ENCODE measurements at regions of chr3 and their contacts with region 1.

Region 1: DNA sequence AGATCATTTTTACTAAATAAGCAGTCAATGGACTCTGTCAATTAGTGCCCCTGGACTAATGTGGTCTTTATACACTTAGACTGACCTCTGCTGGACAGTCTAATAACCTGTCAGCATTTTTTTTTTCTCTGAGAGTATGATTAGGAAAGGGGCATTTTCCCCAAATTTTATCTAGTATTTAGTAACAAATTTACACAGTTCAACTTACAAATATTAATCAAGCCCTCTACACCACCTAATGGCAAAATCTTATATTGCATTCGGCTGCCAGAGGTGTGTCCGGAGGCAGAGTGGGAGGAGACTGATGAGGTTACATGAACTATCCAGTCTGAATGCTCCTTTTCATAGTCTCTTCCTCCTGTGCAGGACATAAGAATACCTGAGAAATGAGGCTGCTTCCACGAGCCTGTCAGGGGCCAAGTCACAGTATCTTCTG is 36.0 kb upstream of the COLQ start:
- DNase-seq: no peak
- ATAC-seq: peak; percentile 80 to 89

Region 2: DNA sequence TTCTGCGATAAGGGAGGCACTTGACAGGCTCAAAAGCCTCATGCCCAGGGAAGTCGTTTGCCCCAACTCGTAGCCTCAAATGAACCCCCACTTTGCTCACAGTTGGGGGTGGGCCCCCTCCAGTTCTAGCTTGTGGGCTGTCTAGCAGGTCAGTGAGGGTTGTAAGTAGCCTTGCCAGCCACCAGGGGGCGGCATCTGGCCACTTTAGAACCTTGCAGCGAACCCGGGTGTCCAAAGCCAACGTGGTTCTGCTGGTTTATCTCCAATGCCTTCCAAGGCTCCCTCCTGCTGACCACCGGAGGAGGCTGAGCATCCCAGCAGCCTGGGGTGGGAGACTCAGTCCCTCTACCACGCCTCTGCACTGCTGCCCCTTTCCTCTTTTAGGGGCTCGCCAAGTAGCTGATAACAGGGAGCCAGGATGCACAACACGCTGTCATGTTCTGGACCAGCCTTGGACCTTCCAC is 449.4 kb before region 1 on chr3:
- intact Hi-C with region 1: loop called in 1 of 2 experiments (anchors 5 kb)
- DNase-seq: peak; percentile 71
- ATAC-seq: peak; percentile 87 to 92

Region 3: DNA sequence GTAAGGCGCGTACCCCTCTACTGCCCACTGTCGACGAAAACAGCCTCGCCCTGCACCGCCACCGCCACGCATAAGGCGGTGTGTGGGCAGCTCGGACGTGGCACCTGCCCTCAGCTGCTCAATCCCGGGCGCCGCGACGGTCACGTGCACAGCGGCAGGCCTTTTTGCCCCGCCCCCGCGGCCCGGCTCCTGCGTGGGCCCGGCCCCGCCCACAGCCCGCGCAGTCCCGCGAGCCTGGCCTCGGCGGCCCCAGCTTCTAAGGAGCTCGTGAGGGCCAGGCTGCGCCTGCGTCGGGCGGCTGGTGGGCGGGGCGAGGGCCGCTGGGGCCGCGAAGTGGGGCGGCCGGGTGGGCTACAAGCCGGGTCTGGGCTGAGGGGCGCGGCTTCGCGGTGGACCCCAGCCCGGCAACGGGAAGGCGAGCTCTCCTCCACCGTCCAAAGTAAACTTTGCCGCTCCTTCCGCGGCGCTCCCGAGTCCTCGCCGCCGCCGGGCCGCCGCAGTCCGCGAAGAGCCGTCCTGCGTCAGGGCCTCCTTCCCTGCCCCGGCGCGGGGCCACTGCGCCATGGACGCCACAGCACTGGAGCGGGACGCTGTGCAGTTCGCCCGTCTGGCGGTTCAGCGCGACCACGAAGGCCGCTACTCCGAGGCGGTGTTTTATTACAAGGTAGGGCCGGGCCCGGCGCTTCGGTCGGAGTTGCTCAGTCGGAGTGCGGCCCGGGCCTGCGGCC is 351.4 kb before region 1 on chr3 and contains the start of gene CAPN7:
- intact Hi-C with region 1: loop called in 1 of 2 experiments (anchors 5 kb)
- DNase-seq: peak; percentile 97
- ATAC-seq: peak; percentile 98 to 99
- total RNA-seq, gene CAPN7: 28.4 to 28.9 TPM

Region 4: DNA sequence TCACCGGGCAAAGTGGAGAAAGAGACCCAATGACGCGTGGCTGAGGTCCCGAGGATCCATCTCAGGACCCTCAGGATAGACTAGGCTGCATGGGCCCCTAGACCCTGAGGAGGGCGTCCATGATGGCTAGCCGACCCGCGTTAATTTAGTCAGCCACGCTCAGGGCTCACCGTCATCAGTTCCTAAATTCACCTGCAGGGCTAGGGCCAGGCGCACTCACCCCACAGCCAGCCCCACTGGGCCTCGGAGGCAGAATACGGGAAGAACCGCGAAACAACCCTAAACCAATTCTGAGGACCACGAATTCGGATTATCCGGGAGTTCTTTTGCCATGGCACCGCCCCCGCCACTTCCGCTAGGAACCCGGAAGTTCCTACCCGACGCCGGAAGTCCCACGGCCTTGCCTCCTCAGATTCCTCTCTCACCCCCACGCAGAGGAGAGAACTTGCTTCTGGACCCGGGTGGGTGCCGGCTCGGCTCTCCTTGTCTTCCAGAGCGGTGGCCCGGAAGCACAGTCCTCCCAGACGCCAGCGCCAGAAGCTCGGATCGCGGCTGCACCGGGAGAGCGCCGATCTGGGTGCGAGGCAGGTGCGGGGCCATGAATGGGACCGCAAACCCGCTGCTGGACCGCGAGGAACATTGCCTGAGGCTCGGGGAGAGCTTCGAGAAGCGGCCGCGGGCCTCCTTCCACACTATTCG is 130.2 kb before region 1 on chr3 and contains the starts of genes EAF1 and METTL6:
- intact Hi-C with region 1: loop called (anchors 5 to 10 kb)
- DNase-seq: peak; percentile 92
- ATAC-seq: peak; percentile 96 to 98
- total RNA-seq, gene EAF1: 8.2 to 12.0 TPM
- total RNA-seq, gene METTL6: 10.3 to 10.8 TPM

Region 5: GRCh38 chr3:15585111-15585845 is 27.7 kb after region 1 on chr3:
- intact Hi-C with region 1: no loop called
- DNase-seq: no peak
- ATAC-seq: peak in 1 of 2 donors; percentile 64

Measured in left cardiac atrium (tissue), 4 donors.